CD8-positive, alpha-beta T cell (primary cell): ENCODE measurements at regions of chr12 and their contacts with region 1.

Region 1: GRCh38 chr12:120116792-120117651 is 469 bp upstream of the RAB35 start:
- DNase-seq: peak; percentile 95 to 99 (median 97)
- ATAC-seq: peak; percentile 84
- H3K4me3 ChIP-seq: peak overlapping the region; percentile 87 to 90
- H3K4me3 Mint-ChIP-seq: peak overlapping the region; percentile 84
- H3K27ac ChIP-seq: peak overlapping the region; percentile 91 to 95
- H3K27ac Mint-ChIP-seq: peak overlapping the region; percentile 88
- H3K4me1 ChIP-seq: peaks cover 53% of the 10 kb centered on the region
- H3K4me1 Mint-ChIP-seq: peaks cover 73% of the 10 kb centered on the region
- H3K27me3 ChIP-seq: no peaks in the 10 kb centered on the region
- H3K27me3 Mint-ChIP-seq: no peaks in the 10 kb centered on the region
- CTCF ChIP-seq: no peak

Region 2: GRCh38 chr12:119876761-119877638 is 240.0 kb before region 1 on chr12 and contains the start of gene CIT:
- CTCF ChIA-PET with region 1: no interaction called
- POLR2A ChIA-PET with region 1: no interaction called
- intact Hi-C with region 1: loop called in 1 of 2 experiments (anchors 2 kb)
- DNase-seq: peak; percentile 64 to 93 (median 83)
- ATAC-seq: peak; percentile 99
- H3K4me3 ChIP-seq: peak within 1 kb of the TSS; percentile 83 to 88
- H3K4me3 Mint-ChIP-seq: peak within 1 kb of the TSS; percentile 86
- H3K27ac ChIP-seq: no peak within 1 kb of the TSS
- H3K27ac Mint-ChIP-seq: peak within 1 kb of the TSS; percentile 53
- H3K4me1 ChIP-seq: no peaks in the 10 kb centered on the region
- H3K4me1 Mint-ChIP-seq: peaks cover 10% of the 10 kb centered on the region
- H3K27me3 ChIP-seq: no peaks in the 10 kb centered on the region
- H3K27me3 Mint-ChIP-seq: no peaks in the 10 kb centered on the region
- CTCF ChIP-seq: no peak
- total RNA-seq, gene CIT: 0.84 to 1.6 TPM

Region 3: GRCh38 chr12:120194534-120195395 is 77.7 kb after region 1 on chr12 and contains the start of gene GCN1:
- CTCF ChIA-PET with region 1: no interaction called
- POLR2A ChIA-PET with region 1: interaction called, 3 read pairs
- intact Hi-C with region 1: loop called (anchors 2 to 5 kb)
- DNase-seq: peak; percentile 76 to 94 (median 88)
- ATAC-seq: peak; percentile 86
- H3K4me3 ChIP-seq: peak within 1 kb of the TSS; percentile 67 to 72
- H3K4me3 Mint-ChIP-seq: peak within 1 kb of the TSS; percentile 82
- H3K27ac ChIP-seq: peak within 1 kb of the TSS; percentile 73 to 88
- H3K27ac Mint-ChIP-seq: peak within 1 kb of the TSS; percentile 95
- H3K4me1 ChIP-seq: peaks cover 36% of the 10 kb centered on the region
- H3K4me1 Mint-ChIP-seq: peaks cover 44% of the 10 kb centered on the region
- H3K27me3 ChIP-seq: no peaks in the 10 kb centered on the region
- H3K27me3 Mint-ChIP-seq: no peaks in the 10 kb centered on the region
- CTCF ChIP-seq: no peak
- total RNA-seq, gene GCN1: 161 to 163 TPM

Region 4: GRCh38 chr12:120200364-120200800 is 83.4 kb after region 1 on chr12:
- CTCF ChIA-PET with region 1: interaction called, 3 read pairs
- POLR2A ChIA-PET with region 1: interaction called, 19 read pairs
- intact Hi-C with region 1: loop called in 1 of 2 experiments (anchors 2 kb)
- DNase-seq: no peak
- ATAC-seq: no peak
- H3K4me3 ChIP-seq: peak overlapping the region; percentile 89 to 91
- H3K4me3 Mint-ChIP-seq: peak overlapping the region; percentile 93
- H3K27ac ChIP-seq: peak overlapping the region; percentile 70 to 83
- H3K27ac Mint-ChIP-seq: peak overlapping the region; percentile 96
- H3K4me1 ChIP-seq: peaks cover 36% of the 10 kb centered on the region
- H3K4me1 Mint-ChIP-seq: peaks cover 32% of the 10 kb centered on the region
- H3K27me3 ChIP-seq: no peaks in the 10 kb centered on the region
- H3K27me3 Mint-ChIP-seq: no peaks in the 10 kb centered on the region
- CTCF ChIP-seq: no peak

Region 5: DNA sequence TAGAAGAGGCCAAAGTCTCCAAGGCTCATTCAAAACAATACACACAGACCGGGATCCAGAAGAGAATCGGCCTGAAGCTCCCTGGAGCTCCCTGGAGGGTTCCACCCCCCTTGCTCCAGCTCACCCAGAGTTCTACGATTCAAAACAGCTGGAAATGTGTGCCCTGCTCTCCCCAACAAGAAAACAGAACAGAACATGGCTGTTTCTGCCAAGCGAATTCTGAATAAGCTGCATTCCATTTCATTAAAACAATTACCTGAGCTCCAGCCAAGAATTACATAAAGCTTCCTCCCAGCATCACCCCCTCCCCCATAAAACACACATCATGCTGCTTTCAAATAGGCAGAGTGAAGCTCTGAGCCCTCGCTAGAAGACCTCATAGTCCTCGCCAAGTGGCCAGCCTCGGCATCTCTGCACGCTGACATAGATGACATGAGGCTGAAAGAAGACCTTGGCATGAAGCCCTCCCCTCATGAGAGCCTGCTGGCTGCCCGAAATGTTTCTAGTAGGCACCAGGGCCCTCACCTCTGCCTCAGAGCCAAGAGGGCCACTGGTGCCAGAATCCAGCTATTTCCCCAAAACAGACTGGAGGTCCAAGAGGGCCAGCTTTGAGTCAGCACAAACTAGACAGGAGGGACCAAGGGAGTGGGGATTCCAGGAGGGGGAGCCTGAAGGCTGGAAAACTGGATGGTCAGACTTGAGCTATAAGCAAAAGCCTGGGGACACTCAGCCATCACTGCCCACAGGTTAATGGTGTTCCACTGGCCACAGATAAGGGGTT is 140.2 kb after region 1 on chr12:
- CTCF ChIA-PET with region 1: no interaction called
- POLR2A ChIA-PET with region 1: no interaction called
- intact Hi-C with region 1: loop called in 1 of 2 experiments (anchors 10 kb)
- DNase-seq: no peak
- ATAC-seq: no peak
- H3K4me3 ChIP-seq: no peak overlapping the region
- H3K4me3 Mint-ChIP-seq: no peak overlapping the region
- H3K27ac ChIP-seq: peak overlapping the region in 1 of 2 experiments; percentile 23
- H3K27ac Mint-ChIP-seq: peak overlapping the region; percentile 83
- H3K4me1 ChIP-seq: peaks cover 89% of the 10 kb centered on the region
- H3K4me1 Mint-ChIP-seq: peaks cover 88% of the 10 kb centered on the region
- H3K27me3 ChIP-seq: no peaks in the 10 kb centered on the region
- H3K27me3 Mint-ChIP-seq: no peaks in the 10 kb centered on the region
- CTCF ChIP-seq: no peak